ENCODE measurements at regions of chr13 and their contacts with region 1.

Region 1: GRCh38 chr13:45162821-45163220 is 38.0 kb downstream of the KCTD4 start:
- DNase-seq: peak; percentile 78
- H3K4me3 ChIP-seq: no peak overlapping the region
- H3K27ac ChIP-seq: peak overlapping the region; percentile 78
- H3K4me1 ChIP-seq: peaks cover 14% of the 10 kb centered on the region
- H3K27me3 ChIP-seq: no peaks in the 10 kb centered on the region
- CTCF ChIP-seq: no peak
- POLR2A ChIP-seq: no peak

Region 2: DNA sequence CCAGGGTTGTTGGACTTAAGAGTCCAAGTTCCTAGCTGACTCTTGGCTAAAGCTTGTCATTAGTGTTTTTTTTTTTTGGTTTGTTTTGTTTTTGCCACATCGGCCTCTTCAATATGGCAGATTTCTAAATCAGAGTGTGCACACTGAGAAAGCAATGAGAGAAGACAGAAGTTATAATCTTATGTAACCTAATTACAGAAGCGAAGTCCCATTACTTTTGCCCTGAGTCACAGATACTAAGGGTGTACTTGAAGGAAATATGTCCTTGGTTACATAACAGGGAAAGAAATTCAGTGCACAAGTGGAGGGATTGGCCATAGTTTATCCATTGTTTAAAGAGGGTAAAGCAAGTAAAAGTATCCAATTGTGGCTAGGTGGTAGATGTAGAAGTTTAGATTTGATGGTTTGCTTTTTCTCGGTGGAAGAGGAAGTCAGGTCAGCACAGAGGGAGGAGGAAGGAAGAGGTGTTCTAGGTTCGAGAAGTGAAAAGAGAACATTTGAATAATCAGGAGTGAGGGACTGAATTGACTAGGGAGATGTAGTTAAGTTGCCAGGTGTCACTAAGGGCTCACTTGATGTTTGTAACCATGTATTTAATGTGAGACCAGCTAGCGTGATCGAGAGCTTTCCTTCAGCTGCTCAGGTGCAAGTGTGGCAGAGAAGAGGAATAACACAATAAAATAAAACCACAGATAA is 30.3 kb before region 1 on chr13:
- CTCF ChIA-PET with region 1: no interaction called
- POLR2A ChIA-PET with region 1: no interaction called
- dilution Hi-C with region 1: no loop called
- intact Hi-C with region 1: no loop called
- DNase-seq: no peak
- H3K4me3 ChIP-seq: no peak overlapping the region
- H3K27ac ChIP-seq: no peak overlapping the region
- H3K4me1 ChIP-seq: no peaks in the 10 kb centered on the region
- H3K27me3 ChIP-seq: no peaks in the 10 kb centered on the region
- CTCF ChIP-seq: no peak
- POLR2A ChIP-seq: no peak

Region 3: DNA sequence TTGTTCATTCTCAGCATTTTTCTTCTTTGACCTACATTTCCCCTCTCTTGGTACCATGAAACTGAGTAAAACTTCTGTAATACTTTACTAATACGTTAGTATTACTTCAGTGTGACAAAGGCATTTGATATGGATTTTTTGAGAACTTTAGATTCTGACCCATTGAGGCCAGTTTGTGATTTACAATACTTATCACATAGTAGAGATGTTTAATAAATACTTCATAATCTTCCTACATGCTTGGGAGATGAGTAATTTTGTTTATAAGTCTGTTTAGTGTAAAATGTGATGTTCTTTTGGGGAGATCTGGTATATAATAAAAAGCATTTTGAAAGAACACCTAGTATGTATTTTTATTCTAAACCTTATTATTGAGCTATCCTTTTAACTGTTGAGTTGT is 12.9 kb before region 1 on chr13:
- CTCF ChIA-PET with region 1: interaction called, 19 read pairs
- POLR2A ChIA-PET with region 1: no interaction called
- dilution Hi-C with region 1: no loop called
- intact Hi-C with region 1: no loop called
- DNase-seq: no peak
- H3K4me3 ChIP-seq: no peak overlapping the region
- H3K27ac ChIP-seq: no peak overlapping the region
- H3K4me1 ChIP-seq: no peaks in the 10 kb centered on the region
- H3K27me3 ChIP-seq: no peaks in the 10 kb centered on the region
- CTCF ChIP-seq: no peak
- POLR2A ChIP-seq: no peak